Sigmoid colon (tissue), 7 donors: ENCODE measurements at regions of chr11 and their contacts with region 1.

Region 1: GRCh38 chr11:118634431-118635236 is 27.2 kb downstream of the PHLDB1 start:
- DNase-seq: peak; percentile 94
- H3K4me3 ChIP-seq: peak overlapping the region; percentile 18 to 48 (median 39)
- H3K27ac ChIP-seq: peak overlapping the region; percentile 80 to 86 (median 82)
- H3K4me1 ChIP-seq: peaks cover 0 to 55% (median 43%) of the 10 kb centered on the region in 4 donors
- H3K27me3 ChIP-seq: no peaks in the 10 kb centered on the region
- CTCF ChIP-seq: peak in 2 of 4 experiments; percentile 9 to 22
- EP300 ChIP-seq: no peak
- POLR2A ChIP-seq: no peak

Region 2: DNA sequence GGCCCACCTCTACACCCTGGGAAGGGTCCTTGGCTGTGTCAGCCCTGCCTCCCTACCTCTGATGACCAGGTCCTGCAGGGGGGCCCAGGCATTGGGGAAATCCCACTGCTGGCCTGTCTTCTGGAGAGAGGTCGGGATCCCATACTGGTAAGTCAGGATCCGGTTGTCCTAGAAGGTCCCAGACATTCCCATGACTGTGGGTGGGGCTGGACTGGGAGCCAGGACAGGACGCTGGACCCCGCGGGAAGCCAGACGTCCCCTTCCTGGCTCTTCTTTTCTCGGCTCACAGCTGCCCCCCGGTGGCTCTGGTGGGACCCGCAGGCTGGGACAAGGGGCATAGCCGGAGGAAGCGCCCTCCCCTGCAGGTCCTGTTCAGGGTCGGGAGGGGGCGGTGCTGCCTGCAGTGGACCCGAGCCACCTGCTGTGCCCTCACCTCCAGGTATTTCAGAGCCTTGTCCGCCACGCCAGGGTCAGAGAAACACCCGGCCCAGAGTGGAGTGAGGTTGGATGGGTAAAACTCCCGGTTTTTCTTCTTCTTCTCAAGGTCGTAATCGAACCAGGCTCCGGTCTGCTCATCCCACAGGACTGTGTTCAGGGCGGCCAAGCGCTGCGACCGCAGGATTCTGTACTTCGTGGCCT is 24.8 kb after region 1 on chr11:
- intact Hi-C with region 1: loop called (anchors 1 kb)
- DNase-seq: peak; percentile 96
- H3K4me3 ChIP-seq: peak overlapping the region in 1 of 4 donors; percentile 3
- H3K27ac ChIP-seq: peak overlapping the region; percentile 30 to 64 (median 54)
- H3K4me1 ChIP-seq: peaks cover 0 to 18% (median 12%) of the 10 kb centered on the region in 4 donors
- H3K27me3 ChIP-seq: no peaks in the 10 kb centered on the region
- CTCF ChIP-seq: peak; percentile 87 to 99 (median 93)
- EP300 ChIP-seq: no peak
- POLR2A ChIP-seq: no peak

Region 3: DNA sequence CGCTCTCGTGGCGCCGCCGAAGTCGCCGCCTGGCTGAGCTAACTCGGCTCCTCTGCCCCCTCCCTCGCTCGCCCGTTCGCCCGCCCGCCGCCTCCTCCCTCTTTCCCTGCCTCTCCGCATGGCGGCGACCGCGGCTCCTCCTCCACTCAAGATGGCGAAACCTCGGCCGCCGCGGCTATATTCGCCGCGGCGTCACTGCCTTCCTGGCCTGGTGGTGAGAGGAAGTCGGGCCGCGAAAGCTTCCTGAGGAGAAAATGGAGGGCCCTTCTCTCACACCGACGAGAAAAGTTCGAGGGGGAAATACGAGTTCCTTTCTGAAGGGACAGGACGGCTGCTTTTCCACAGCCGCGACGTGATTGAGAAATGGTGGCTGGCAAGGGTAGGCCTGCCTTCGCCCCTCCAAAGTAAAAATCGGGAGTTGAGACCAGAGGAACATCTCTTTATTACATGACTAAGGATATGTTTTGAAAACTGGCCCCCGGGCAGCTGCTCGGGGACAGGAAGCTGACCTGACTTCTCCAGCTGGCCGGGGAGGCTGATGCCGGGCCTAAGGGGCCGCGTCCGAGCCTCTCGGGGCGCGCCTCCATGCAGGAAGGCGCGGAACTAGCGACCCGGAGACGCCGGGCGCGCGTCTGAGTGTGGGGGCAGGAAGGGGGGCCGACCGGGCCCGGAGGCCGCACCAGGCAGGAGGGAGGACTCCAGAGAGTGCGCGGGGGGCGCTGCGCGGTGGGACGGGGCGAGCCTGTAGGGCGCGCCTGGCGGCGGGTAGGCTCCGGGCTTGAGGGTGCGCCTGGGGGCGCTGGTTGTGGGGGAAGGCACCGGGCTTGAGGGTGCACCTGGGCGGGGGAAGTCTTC is 156.7 kb after region 1 on chr11 and contains the start of gene DDX6:
- intact Hi-C with region 1: no loop called
- DNase-seq: peak; percentile 96
- H3K4me3 ChIP-seq: peak within 1 kb of the TSS; percentile 66 to 95 (median 90)
- H3K27ac ChIP-seq: peak within 1 kb of the TSS; percentile 97 to 99 (median 98)
- H3K4me1 ChIP-seq: peaks cover 0 to 45% (median 34%) of the 10 kb centered on the region in 4 donors
- H3K27me3 ChIP-seq: no peaks in the 10 kb centered on the region
- CTCF ChIP-seq: peak in 1 of 4 experiments; percentile 37
- EP300 ChIP-seq: no peak
- POLR2A ChIP-seq: peak; percentile 84 to 90
- total RNA-seq, gene DDX6: 97.8 to 137 (median 121) TPM

Region 4: GRCh38 chr11:118856314-118856713 is 221.7 kb after region 1 on chr11:
- intact Hi-C with region 1: no loop called
- DNase-seq: no peak
- H3K4me3 ChIP-seq: no peak overlapping the region
- H3K27ac ChIP-seq: no peak overlapping the region
- H3K4me1 ChIP-seq: no peaks in the 10 kb centered on the region
- H3K27me3 ChIP-seq: no peaks in the 10 kb centered on the region
- CTCF ChIP-seq: no peak
- EP300 ChIP-seq: no peak
- POLR2A ChIP-seq: no peak

Region 5: DNA sequence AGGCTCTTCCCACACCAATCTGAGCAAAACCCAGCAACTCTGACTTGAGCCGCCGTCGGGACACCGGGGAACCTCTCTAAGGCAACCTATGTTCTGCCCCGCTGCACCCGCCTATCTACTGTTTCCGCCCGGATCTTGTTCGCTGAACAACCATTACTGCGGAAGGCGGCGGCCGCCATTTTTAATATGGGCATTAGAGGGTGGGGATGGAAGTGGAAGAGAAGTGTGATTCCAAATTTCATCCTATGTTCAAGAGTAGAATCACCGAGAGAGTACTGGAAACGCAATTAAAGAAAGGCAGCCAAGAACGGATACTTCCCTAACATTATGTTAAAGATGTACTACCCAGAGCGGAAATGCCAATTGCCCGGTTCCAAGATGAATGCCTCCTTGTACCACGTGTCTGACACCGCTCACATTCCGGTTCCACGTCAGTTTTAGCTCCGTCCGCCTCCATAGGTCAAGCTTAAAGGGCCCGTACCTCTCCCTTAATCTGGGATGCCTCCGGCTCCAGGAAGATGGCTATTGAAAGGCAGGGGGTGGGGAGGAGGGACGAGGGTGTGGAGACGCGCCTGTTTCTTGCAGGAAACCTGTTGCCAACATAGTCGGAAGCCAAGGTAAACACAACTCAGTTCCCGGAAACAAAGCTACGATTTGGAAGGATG is 467.3 kb after region 1 on chr11 and contains the start of gene DPAGT1:
- intact Hi-C with region 1: no loop called
- DNase-seq: peak; percentile 97
- H3K4me3 ChIP-seq: peak within 1 kb of the TSS; percentile 77 to 82 (median 78)
- H3K27ac ChIP-seq: peak within 1 kb of the TSS; percentile 84 to 92 (median 90)
- H3K4me1 ChIP-seq: peaks cover 0 to 36% (median 32%) of the 10 kb centered on the region in 4 donors
- H3K27me3 ChIP-seq: no peaks in the 10 kb centered on the region
- CTCF ChIP-seq: peak in 1 of 4 experiments; percentile 1
- EP300 ChIP-seq: no peak
- POLR2A ChIP-seq: peak in 1 of 2 donors; percentile 37
- total RNA-seq, gene DPAGT1: 16.1 to 22.1 (median 16.8) TPM